ENCODE measurements at regions of chr9 and their contacts with region 1.

Region 1: GRCh38 chr9:19048966-19049916 is at the start of gene RRAGA:
- DNase-seq: peak; percentile 98
- ATAC-seq: peak; percentile 90
- H3K4me3 Mint-ChIP-seq: peak within 1 kb of the TSS; percentile 91
- H3K27ac Mint-ChIP-seq: peak within 1 kb of the TSS; percentile 97
- H3K4me1 Mint-ChIP-seq: peaks cover 46% of the 10 kb centered on the region
- H3K27me3 Mint-ChIP-seq: no peaks in the 10 kb centered on the region
- CTCF ChIP-seq: no peak
- total RNA-seq, gene RRAGA: 44.6 and 45.0 TPM in 2 replicates

Region 2: GRCh38 chr9:19102631-19103345 is 53.5 kb after region 1 on chr9 and contains the start of gene HAUS6:
- CTCF ChIA-PET with region 1: interaction called, 4 read pairs
- POLR2A ChIA-PET with region 1: interaction called, 11 read pairs
- intact Hi-C with region 1: loop called (anchors 1 kb)
- DNase-seq: peak; percentile 86
- ATAC-seq: peak; percentile 94
- H3K4me3 Mint-ChIP-seq: peak within 1 kb of the TSS; percentile 98
- H3K27ac Mint-ChIP-seq: peak within 1 kb of the TSS; percentile 93
- H3K4me1 Mint-ChIP-seq: peaks cover 17% of the 10 kb centered on the region
- H3K27me3 Mint-ChIP-seq: no peaks in the 10 kb centered on the region
- CTCF ChIP-seq: no peak
- total RNA-seq, gene HAUS6: 13.7 and 15.3 TPM in 2 replicates

Region 3: GRCh38 chr9:19379697-19380046 is 330.4 kb after region 1 on chr9:
- CTCF ChIA-PET with region 1: no interaction called
- POLR2A ChIA-PET with region 1: interaction called, 19 read pairs
- intact Hi-C with region 1: loop called (anchors 1 kb)
- DNase-seq: no peak
- ATAC-seq: peak; percentile 37
- H3K4me3 Mint-ChIP-seq: peak overlapping the region; percentile 100
- H3K27ac Mint-ChIP-seq: peak overlapping the region; percentile 99
- H3K4me1 Mint-ChIP-seq: peaks cover 49% of the 10 kb centered on the region
- H3K27me3 Mint-ChIP-seq: no peaks in the 10 kb centered on the region
- CTCF ChIP-seq: no peak

Region 4: DNA sequence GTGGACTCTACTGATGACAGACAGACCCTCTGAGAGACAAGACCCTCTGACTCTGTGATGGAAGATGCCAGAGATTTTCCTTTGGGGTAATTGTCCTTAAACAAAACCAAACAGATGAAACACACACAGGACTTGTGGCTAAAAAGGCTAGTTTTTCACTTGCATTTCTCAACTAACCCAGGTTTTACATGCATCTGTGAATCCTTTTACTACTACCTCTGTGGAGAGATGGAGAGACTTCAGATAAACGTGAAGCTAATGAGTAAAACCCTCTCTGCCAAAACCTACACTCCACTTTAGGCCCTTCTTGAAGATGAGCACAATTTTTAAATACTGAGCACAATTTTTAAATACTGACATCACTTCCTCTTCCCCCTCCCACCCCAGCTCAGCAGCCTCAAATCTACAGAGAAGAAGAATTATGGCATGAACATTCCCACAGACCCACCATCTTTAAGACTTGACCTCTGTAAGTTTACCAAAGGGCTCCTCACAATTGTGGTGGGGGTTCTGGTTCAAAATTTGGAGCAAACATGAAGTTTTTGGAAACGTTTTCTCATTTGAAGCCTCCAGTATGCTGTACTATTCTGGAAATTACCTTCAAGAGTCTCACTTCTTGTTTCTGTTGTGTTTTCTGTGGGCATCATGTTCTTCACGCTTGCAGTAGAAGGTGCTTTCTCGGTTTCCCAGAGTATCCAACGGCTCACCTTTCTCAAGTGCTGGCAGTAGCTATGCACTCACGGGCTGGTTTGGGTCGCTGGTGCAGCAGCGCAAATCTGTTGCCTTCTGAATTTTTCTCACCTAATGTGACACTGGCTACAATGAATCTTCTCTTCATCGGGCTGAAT is 402.2 kb after region 1 on chr9:
- CTCF ChIA-PET with region 1: interaction called, 26 read pairs
- POLR2A ChIA-PET with region 1: interaction called, 12 read pairs
- intact Hi-C with region 1: no loop called
- DNase-seq: no peak
- ATAC-seq: peak; percentile 96
- H3K4me3 Mint-ChIP-seq: peak overlapping the region; percentile 85
- H3K27ac Mint-ChIP-seq: peak overlapping the region; percentile 95
- H3K4me1 Mint-ChIP-seq: peaks cover 16% of the 10 kb centered on the region
- H3K27me3 Mint-ChIP-seq: no peaks in the 10 kb centered on the region
- CTCF ChIP-seq: no peak

Region 5: DNA sequence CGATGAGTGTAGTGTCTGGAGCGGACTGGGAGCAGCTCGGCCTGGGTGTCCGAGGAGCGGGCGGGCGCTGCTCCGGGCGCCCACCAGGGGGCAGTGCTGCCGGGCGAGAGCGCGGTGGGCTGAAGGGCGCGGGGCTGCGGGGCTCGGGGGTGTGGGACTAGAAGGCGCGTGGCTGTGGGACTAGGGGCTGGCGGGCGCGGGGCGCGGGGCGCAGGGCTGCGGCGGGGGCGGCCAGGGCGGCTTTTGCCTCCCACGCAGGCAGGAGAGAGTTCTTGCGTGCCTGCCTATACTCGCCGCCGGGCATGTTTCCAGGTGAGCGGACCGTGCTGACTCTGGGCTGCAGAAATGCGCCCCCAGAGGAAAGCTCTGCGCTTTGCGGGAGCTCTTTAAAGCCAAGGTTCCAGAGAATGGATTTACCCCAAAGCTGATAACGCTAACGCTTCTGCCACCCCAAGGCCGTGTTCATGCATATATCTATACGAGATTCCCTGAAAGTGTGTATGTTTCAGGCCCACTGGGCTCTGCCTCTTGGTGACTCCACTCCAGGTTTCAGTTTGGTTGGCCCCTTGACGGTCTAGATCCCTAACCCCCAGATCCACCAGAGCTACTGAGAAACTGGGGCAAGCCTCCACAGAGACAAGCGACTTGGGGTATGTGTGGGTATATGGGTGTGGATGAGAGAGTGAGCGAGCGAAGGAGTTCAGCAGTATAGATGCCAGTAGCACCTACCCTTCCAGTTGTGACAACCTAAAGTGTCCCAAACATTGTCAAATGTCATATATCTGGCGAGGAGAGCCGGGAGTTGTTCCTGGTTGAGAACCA is 415.7 kb after region 1 on chr9:
- CTCF ChIA-PET with region 1: interaction called, 12 read pairs
- POLR2A ChIA-PET with region 1: interaction called, 5 read pairs
- intact Hi-C with region 1: no loop called
- DNase-seq: peak; percentile 77
- ATAC-seq: peak; percentile 93
- H3K4me3 Mint-ChIP-seq: peak overlapping the region; percentile 88
- H3K27ac Mint-ChIP-seq: peak overlapping the region; percentile 69
- H3K4me1 Mint-ChIP-seq: peaks cover 11% of the 10 kb centered on the region
- H3K27me3 Mint-ChIP-seq: no peaks in the 10 kb centered on the region
- CTCF ChIP-seq: peak; percentile 60